IMR-90 (cell line): ENCODE measurements at regions of chr2 and their contacts with region 1.

Region 1: GRCh38 chr2:191165176-191165643 is 14.4 kb upstream of the STAT4 start:
- DNase-seq: peak; percentile 72
- ATAC-seq: peak; percentile 77
- H3K4me3 ChIP-seq: no peak overlapping the region
- H3K27ac ChIP-seq: peak overlapping the region; percentile 30; the same call in 1 of the 2 replicates
- H3K4me1 ChIP-seq: peaks cover 16% of the 10 kb centered on the region
- H3K27me3 ChIP-seq: no peaks in the 10 kb centered on the region
- CTCF ChIP-seq: peak; percentile 80
- POLR2A ChIP-seq: 0 out of 2 replicates have a peak, but pooled peaks have one; percentile 37
- RAD21 ChIP-seq: peak; percentile 91

Region 2: DNA sequence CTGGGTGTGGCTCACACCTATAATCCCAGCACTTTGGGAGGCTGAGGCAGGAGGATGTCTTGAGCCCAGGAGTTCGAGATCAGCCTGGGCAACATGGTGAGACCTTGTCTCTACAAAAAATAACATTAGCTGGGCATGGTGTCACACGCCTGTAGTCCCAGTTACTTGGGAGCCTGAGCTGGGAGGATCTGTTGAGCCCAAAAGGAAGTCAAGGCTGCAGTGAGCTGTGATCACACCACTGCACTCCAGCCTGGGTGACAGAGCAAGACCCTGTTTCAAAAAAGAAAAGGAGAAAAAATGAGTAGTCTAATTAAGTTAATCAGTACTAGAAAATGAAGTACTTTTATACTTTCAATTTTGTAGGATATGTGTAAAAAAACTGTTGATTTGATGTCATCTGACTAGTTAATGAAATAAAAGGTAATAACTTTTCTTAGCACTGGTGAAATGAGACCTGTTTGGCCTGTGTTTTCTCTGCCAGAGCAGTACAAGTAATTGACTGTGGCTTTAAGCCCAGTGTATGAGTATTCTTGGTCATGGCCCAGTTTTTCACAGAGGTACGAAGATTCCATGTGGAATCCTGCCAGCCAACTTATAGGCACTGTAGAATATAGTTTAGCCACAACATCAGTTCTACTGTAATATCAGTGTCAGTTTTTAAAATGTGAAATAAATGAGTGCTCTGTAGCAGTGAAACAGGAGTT is 721.3 kb before region 1 on chr2:
- CTCF ChIA-PET with region 1: no interaction called
- POLR2A ChIA-PET with region 1: no interaction called
- dilution Hi-C with region 1: no loop called
- in situ Hi-C with region 1: no loop called
- intact Hi-C with region 1: no loop called
- DNase-seq: peak; percentile 67
- ATAC-seq: 0 out of 2 replicates have a peak, but pooled peaks have one; percentile 29
- H3K4me3 ChIP-seq: no peak overlapping the region
- H3K27ac ChIP-seq: no peak overlapping the region
- H3K4me1 ChIP-seq: peaks cover 4% of the 10 kb centered on the region
- H3K27me3 ChIP-seq: no peaks in the 10 kb centered on the region
- CTCF ChIP-seq: no peak
- POLR2A ChIP-seq: no peak
- RAD21 ChIP-seq: no peak

Region 3: DNA sequence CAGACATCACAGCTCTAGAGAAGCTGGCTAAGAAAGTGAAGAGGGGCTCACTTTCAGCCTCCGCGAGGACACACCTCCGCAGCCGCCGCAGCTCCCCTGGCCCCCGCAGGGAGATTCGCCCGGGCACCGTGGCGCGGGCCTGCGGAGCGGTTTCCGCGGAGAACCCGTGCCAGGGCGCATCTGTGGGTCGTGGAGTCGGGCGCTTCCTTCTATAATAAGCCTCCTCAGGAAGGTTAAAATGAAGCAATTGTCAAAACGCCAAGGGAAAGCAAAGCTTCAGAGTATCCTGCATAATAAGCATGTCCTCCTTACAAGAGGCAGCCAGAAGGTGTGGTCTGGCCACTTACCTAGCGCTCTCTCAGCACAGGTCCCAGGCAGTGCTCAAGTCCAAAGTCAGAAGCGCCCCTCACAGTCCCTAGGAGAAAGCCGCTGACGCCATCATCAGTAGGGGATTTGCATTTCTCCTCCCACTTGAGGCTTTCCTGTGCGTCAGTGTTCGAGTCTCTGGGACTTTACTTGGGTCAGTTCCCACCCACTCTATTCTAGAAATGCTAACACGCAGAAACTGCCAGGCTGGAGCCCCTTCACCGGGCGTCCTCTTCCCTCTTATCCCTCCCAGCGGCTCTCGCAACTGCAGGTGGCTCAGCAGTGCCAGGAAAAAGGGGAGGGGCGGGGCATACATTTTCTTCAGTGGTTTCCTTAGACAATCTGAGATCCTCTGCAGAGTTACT is 14.4 kb before region 1 on chr2 and contains the start of gene STAT4:
- CTCF ChIA-PET with region 1: interaction called, 16 read pairs
- POLR2A ChIA-PET with region 1: no interaction called
- dilution Hi-C with region 1: no loop called
- in situ Hi-C with region 1: no loop called
- intact Hi-C with region 1: no loop called
- DNase-seq: peak; percentile 47
- ATAC-seq: peak; percentile 48
- H3K4me3 ChIP-seq: peak within 1 kb of the TSS; percentile 41
- H3K27ac ChIP-seq: no peak within 1 kb of the TSS
- H3K4me1 ChIP-seq: no peaks in the 10 kb centered on the region
- H3K27me3 ChIP-seq: peaks cover 1% of the 10 kb centered on the region; the same call in 1 of the 2 replicates
- CTCF ChIP-seq: no peak
- POLR2A ChIP-seq: no peak
- RAD21 ChIP-seq: no peak
- total RNA-seq, gene STAT4: 0.28 and 0.36 TPM in 2 replicates

Region 4: DNA sequence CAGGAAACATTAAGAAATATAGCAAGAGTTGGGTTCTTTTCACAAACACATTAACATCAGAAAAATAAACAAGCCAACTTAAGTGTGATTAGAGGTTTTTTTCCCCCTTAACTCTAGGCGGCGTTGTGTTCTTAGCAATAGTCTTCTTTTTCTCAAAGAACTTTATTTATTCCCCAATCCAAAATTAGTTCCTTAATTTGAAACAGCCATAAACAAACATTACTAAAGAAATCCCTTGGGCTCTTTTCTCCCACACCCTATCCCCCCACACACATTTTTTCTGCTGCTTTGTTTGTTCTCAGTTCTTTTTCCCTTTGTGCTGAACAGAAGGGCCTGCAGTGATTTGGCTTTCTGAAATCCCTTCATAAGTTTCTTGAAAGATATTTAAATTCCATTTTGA is 66.8 kb after region 1 on chr2:
- CTCF ChIA-PET with region 1: no interaction called
- POLR2A ChIA-PET with region 1: no interaction called
- dilution Hi-C with region 1: no loop called
- in situ Hi-C with region 1: no loop called
- intact Hi-C with region 1: loop called (anchors 5 kb)
- DNase-seq: peak; percentile 48
- ATAC-seq: peak; percentile 56
- H3K4me3 ChIP-seq: no peak overlapping the region
- H3K27ac ChIP-seq: no peak overlapping the region
- H3K4me1 ChIP-seq: peaks cover 18% of the 10 kb centered on the region
- H3K27me3 ChIP-seq: no peaks in the 10 kb centered on the region
- CTCF ChIP-seq: peak; percentile 60
- POLR2A ChIP-seq: no peak
- RAD21 ChIP-seq: peak; percentile 62

Region 5: DNA sequence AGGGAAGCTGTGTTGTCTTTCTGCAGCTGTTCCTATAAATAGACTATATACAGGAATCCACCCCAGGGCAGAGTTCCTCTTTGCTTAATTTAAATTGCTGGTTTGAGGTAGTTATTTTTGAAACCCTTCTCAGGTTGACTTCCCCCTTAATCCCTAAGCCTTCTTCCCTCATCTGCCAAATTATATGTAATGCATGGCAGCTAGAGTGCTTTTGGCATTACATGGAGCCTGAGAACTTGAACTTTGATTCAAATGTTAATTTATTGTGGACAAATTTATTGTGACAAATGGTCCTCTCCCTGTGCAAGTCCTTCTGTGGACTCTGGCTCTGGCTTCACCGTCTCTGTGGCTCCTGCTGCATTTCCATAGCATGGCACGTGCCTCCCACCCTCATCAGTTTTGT is 109.2 kb after region 1 on chr2:
- CTCF ChIA-PET with region 1: no interaction called
- POLR2A ChIA-PET with region 1: no interaction called
- dilution Hi-C with region 1: no loop called
- in situ Hi-C with region 1: no loop called
- intact Hi-C with region 1: no loop called
- DNase-seq: no peak
- ATAC-seq: no peak
- H3K4me3 ChIP-seq: no peak overlapping the region
- H3K27ac ChIP-seq: no peak overlapping the region
- H3K4me1 ChIP-seq: peaks cover 7% of the 10 kb centered on the region
- H3K27me3 ChIP-seq: no peaks in the 10 kb centered on the region
- CTCF ChIP-seq: no peak
- POLR2A ChIP-seq: no peak
- RAD21 ChIP-seq: no peak

Region 6: GRCh38 chr2:191299010-191299409 is 133.8 kb after region 1 on chr2:
- CTCF ChIA-PET with region 1: no interaction called
- POLR2A ChIA-PET with region 1: no interaction called
- dilution Hi-C with region 1: no loop called
- in situ Hi-C with region 1: no loop called
- intact Hi-C with region 1: loop called (anchors 5 kb)
- DNase-seq: peak; percentile 34
- ATAC-seq: peak; percentile 36
- H3K4me3 ChIP-seq: no peak overlapping the region
- H3K27ac ChIP-seq: peak overlapping the region; percentile 86; the same call in 1 of the 2 replicates
- H3K4me1 ChIP-seq: peaks cover 33% of the 10 kb centered on the region
- H3K27me3 ChIP-seq: no peaks in the 10 kb centered on the region
- CTCF ChIP-seq: peak; percentile 56
- POLR2A ChIP-seq: no peak
- RAD21 ChIP-seq: peak; percentile 64

Region 7: DNA sequence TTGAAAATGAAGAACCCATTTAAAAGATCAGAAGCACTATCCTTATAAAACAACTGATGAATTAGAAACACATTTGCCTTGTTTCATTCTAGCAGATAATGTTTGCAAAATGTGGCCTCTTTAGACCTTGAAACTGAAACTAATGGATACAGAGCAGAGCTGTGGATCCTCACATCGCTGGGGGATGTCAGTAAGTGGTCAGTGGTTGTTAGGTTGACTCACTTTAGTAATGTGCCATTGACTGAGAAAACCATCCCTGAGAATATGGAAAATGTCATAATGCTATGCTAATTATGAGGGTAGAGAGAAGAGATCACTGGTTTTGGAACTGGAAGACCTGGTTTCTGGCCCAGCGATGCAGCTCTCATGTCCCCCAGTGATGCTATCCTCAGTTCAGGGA is 256.7 kb after region 1 on chr2:
- CTCF ChIA-PET with region 1: no interaction called
- POLR2A ChIA-PET with region 1: no interaction called
- dilution Hi-C with region 1: no loop called
- in situ Hi-C with region 1: no loop called
- intact Hi-C with region 1: loop called (anchors 5 kb)
- DNase-seq: no peak
- ATAC-seq: no peak
- H3K4me3 ChIP-seq: no peak overlapping the region
- H3K27ac ChIP-seq: no peak overlapping the region
- H3K4me1 ChIP-seq: no peaks in the 10 kb centered on the region; the same call in 1 of the 2 replicates
- H3K27me3 ChIP-seq: no peaks in the 10 kb centered on the region
- CTCF ChIP-seq: no peak
- POLR2A ChIP-seq: no peak
- RAD21 ChIP-seq: no peak

Region 8: GRCh38 chr2:191521608-191522208 is 356.5 kb after region 1 on chr2:
- CTCF ChIA-PET with region 1: interaction called, 17 read pairs
- POLR2A ChIA-PET with region 1: no interaction called
- dilution Hi-C with region 1: no loop called
- in situ Hi-C with region 1: no loop called
- intact Hi-C with region 1: loop called (anchors 1 kb)
- DNase-seq: peak; percentile 55
- ATAC-seq: peak; percentile 68; the same call in 1 of the 2 replicates
- H3K4me3 ChIP-seq: no peak overlapping the region
- H3K27ac ChIP-seq: no peak overlapping the region
- H3K4me1 ChIP-seq: no peaks in the 10 kb centered on the region
- H3K27me3 ChIP-seq: no peaks in the 10 kb centered on the region; the same call in 1 of the 2 replicates
- CTCF ChIP-seq: peak; percentile 90
- POLR2A ChIP-seq: 0 out of 2 replicates have a peak, but pooled peaks have one; percentile 40
- RAD21 ChIP-seq: peak; percentile 83